ENCODE measurements at regions of chr11 and their contacts with region 1.

Region 1: DNA sequence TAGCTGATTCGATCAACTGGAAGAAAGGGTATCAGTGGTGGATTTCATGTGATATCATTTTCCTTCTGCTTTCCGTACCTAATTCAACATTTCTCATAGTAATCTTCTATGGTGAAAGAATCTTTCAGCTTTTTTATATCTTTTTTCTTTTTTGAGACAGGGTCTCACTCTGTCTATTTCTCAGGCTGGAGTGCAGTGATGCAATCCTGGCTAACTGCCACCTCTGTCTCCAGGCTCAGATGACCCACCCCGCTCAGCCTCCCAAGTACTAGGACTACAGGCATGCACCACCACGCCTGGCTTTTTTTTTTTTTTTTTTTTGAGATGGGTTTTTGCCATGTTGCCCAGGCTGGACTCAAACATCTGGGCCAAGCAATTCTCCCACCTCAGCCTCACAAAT is 18.6 kb upstream of the CHORDC1 start:
- DNase-seq: no peak
- ATAC-seq: no peak
- H3K4me3 ChIP-seq: no peak overlapping the region
- H3K4me3 Mint-ChIP-seq: peak overlapping the region in 1 of 3 donors; percentile 26
- H3K27ac ChIP-seq: no peak overlapping the region
- H3K27ac Mint-ChIP-seq: no peak overlapping the region
- H3K4me1 ChIP-seq: peaks cover 0 to 6% of the 10 kb centered on the region in 2 experiments
- H3K4me1 Mint-ChIP-seq: peaks cover 0 to 16% (median 14%) of the 10 kb centered on the region in 3 donors
- H3K27me3 ChIP-seq: peaks cover 0 to 3% of the 10 kb centered on the region in 2 experiments
- H3K27me3 Mint-ChIP-seq: peaks cover 13 to 20% of the 10 kb centered on the region in 2 donors

Region 2: GRCh38 chr11:90465507-90465906 is 224.1 kb after region 1 on chr11:
- CTCF ChIA-PET with region 1: interaction called in 1 of 2 experiments, 11 read pairs
- POLR2A ChIA-PET with region 1: no interaction called
- DNase-seq: no peak
- ATAC-seq: no peak
- H3K4me3 ChIP-seq: no peak overlapping the region
- H3K4me3 Mint-ChIP-seq: no peak overlapping the region
- H3K27ac ChIP-seq: no peak overlapping the region
- H3K27ac Mint-ChIP-seq: no peak overlapping the region
- H3K4me1 ChIP-seq: no peaks in the 10 kb centered on the region
- H3K4me1 Mint-ChIP-seq: no peaks in the 10 kb centered on the region
- H3K27me3 ChIP-seq: no peaks in the 10 kb centered on the region
- H3K27me3 Mint-ChIP-seq: peaks cover 0 to 8% of the 10 kb centered on the region in 2 donors

Region 3: DNA sequence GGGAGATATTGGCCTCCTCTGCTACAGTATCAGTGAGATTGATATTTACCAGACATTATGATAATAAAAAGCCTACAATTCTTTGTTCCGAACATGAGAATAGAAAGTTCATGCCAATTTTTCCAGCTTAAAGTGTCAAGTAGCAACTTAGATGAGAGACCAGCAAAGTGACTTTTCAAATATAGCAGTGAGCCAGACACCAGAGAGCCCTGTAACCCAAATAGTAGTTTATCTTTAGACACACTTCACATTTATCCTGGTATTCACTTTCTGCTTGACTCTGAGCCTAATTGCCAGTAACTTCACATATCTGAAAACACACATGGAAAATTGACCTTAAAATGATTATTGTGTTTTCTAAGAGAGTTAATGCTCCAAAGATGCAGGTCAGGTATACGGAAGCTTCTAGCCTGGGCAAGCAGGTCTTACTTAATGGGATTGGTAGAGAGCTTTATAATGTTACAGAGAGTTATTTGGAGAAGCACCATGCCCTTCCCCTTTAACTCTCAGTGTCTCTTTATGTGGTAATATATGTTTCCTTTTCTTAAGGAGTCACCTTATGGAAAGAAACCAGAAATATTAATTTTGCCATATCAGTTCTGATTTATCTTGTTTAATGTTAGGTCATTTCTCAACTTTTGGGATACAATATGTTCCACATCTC is 833.8 kb after region 1 on chr11:
- CTCF ChIA-PET with region 1: no interaction called
- POLR2A ChIA-PET with region 1: no interaction called
- DNase-seq: no peak
- ATAC-seq: no peak
- H3K4me3 ChIP-seq: no peak overlapping the region
- H3K4me3 Mint-ChIP-seq: no peak overlapping the region
- H3K27ac ChIP-seq: no peak overlapping the region
- H3K27ac Mint-ChIP-seq: no peak overlapping the region
- H3K4me1 ChIP-seq: no peaks in the 10 kb centered on the region
- H3K4me1 Mint-ChIP-seq: no peaks in the 10 kb centered on the region
- H3K27me3 ChIP-seq: no peaks in the 10 kb centered on the region
- H3K27me3 Mint-ChIP-seq: no peaks in the 10 kb centered on the region